Ovary (tissue), 10 donors: ENCODE measurements at regions of chr11 and their contacts with region 1.

Region 1: GRCh38 chr11:20127671-20128527 is 32.4 kb downstream of the DBX1 start:
- DNase-seq: peak; percentile 68 to 84 (median 81)
- H3K4me3 ChIP-seq: no peak overlapping the region
- H3K27ac ChIP-seq: no peak overlapping the region
- H3K4me1 ChIP-seq: peaks cover 3% of the 10 kb centered on the region
- H3K27me3 ChIP-seq: no peaks in the 10 kb centered on the region
- CTCF ChIP-seq: peak; percentile 51 to 68 (median 55)
- EP300 ChIP-seq: no peak
- POLR2A ChIP-seq: no peak

Region 2: GRCh38 chr11:19546325-19546724 is 581.6 kb before region 1 on chr11:
- intact Hi-C with region 1: loop called in 1 of 4 experiments (anchors 10 kb)
- DNase-seq: no peak
- H3K4me3 ChIP-seq: no peak overlapping the region
- H3K27ac ChIP-seq: no peak overlapping the region
- H3K4me1 ChIP-seq: no peaks in the 10 kb centered on the region
- H3K27me3 ChIP-seq: no peaks in the 10 kb centered on the region
- CTCF ChIP-seq: no peak
- EP300 ChIP-seq: no peak
- POLR2A ChIP-seq: no peak

Region 3: GRCh38 chr11:19561011-19561410 is 566.9 kb before region 1 on chr11:
- intact Hi-C with region 1: loop called in 3 of 4 experiments (anchors 5 to 10 kb)
- DNase-seq: no peak
- H3K4me3 ChIP-seq: no peak overlapping the region
- H3K27ac ChIP-seq: no peak overlapping the region
- H3K4me1 ChIP-seq: no peaks in the 10 kb centered on the region
- H3K27me3 ChIP-seq: no peaks in the 10 kb centered on the region
- CTCF ChIP-seq: no peak
- EP300 ChIP-seq: no peak
- POLR2A ChIP-seq: no peak

Region 4: GRCh38 chr11:19566583-19567379 is 561.1 kb before region 1 on chr11:
- intact Hi-C with region 1: loop called in 3 of 4 experiments (anchors 5 to 10 kb)
- DNase-seq: no peak
- H3K4me3 ChIP-seq: no peak overlapping the region
- H3K27ac ChIP-seq: no peak overlapping the region
- H3K4me1 ChIP-seq: no peaks in the 10 kb centered on the region
- H3K27me3 ChIP-seq: no peaks in the 10 kb centered on the region
- CTCF ChIP-seq: no peak
- EP300 ChIP-seq: no peak
- POLR2A ChIP-seq: no peak

Region 5: GRCh38 chr11:19903620-19904069 is 224.3 kb before region 1 on chr11:
- intact Hi-C with region 1: loop called in 1 of 4 experiments (anchors 2 kb)
- DNase-seq: peak; percentile 72 to 86 (median 80)
- H3K4me3 ChIP-seq: no peak overlapping the region
- H3K27ac ChIP-seq: no peak overlapping the region
- H3K4me1 ChIP-seq: peaks cover 6% of the 10 kb centered on the region
- H3K27me3 ChIP-seq: no peaks in the 10 kb centered on the region
- CTCF ChIP-seq: peak in 2 of 3 donors; percentile 47 to 76
- EP300 ChIP-seq: no peak
- POLR2A ChIP-seq: no peak

Region 6: GRCh38 chr11:19951558-19952115 is 176.3 kb before region 1 on chr11:
- intact Hi-C with region 1: loop called (anchors 2 to 5 kb)
- DNase-seq: no peak
- H3K4me3 ChIP-seq: no peak overlapping the region
- H3K27ac ChIP-seq: peak overlapping the region in 1 of 2 donors; percentile 36
- H3K4me1 ChIP-seq: peaks cover 4% of the 10 kb centered on the region
- H3K27me3 ChIP-seq: no peaks in the 10 kb centered on the region
- CTCF ChIP-seq: peak; percentile 18 to 73 (median 73)
- EP300 ChIP-seq: no peak
- POLR2A ChIP-seq: no peak

Region 7: DNA sequence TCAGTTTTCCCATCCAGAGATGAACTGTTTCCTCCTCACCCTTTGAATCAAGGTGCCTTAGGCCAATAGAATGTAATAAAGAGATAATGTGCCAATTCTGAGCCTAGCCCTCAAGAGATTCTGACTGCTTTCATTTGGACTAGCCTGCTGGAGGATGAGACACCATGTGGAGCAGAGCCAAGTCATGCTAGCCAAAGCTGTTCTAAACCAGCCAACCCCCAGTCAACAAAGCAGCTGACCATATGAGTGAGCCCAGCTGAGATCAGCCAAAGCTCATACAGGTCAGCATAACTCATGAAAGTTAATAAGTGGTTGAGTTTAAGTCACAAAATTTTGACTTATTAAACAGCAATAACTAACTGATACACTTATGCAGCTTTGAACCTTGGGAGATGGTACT is 99.0 kb after region 1 on chr11:
- intact Hi-C with region 1: no loop called
- DNase-seq: no peak
- H3K4me3 ChIP-seq: no peak overlapping the region
- H3K27ac ChIP-seq: no peak overlapping the region
- H3K4me1 ChIP-seq: no peaks in the 10 kb centered on the region
- H3K27me3 ChIP-seq: no peaks in the 10 kb centered on the region
- CTCF ChIP-seq: no peak
- EP300 ChIP-seq: no peak
- POLR2A ChIP-seq: no peak

Region 8: DNA sequence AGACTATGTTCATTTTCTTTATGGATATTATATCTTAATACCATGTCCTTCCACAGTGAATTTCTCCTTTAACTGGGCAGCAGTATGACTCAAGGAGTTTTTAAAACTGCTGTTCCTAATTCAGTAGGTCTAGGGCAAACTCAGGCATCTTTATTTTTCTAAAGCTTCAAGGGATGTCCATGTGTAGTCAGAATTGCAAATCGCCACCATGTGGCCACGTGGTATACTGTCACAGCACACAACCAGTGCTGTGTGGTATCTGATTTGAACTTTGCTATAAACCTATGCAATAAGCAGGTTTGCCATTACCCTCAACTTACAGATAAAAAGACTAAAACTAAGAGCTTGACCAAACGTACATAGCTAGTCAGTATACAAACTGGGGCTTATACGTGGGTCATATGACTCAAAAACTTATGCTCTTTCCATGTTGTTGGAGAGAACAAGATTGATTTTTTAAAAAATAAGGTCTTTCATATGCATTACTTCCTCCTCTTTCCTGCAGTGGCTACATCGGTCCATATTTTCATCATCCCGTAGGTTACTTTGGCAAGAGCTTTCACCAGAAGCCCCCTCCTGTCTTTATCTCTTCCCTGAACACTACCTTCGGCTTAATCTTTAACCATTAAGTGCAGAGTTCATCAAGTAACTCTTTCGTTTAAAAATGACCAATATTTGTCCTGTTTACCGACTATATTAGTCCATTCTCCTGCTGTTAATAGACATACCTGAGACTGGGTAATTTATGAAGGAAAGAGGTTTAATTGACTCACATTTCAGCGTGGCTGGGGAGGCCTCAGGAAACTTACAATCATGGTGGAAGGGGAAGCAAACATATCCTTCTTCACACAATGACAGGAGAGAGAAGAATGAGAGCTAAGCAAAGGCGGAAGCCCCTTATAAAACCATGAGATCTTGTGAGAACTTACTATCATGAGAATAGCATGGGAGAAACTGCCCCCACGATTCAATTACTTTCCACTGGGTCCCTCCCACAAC is 227.6 kb after region 1 on chr11:
- intact Hi-C with region 1: loop called in 1 of 4 experiments (anchors 10 kb)
- DNase-seq: no peak
- H3K4me3 ChIP-seq: no peak overlapping the region
- H3K27ac ChIP-seq: no peak overlapping the region
- H3K4me1 ChIP-seq: no peaks in the 10 kb centered on the region
- H3K27me3 ChIP-seq: no peaks in the 10 kb centered on the region
- CTCF ChIP-seq: peak in 2 of 3 donors; percentile 9 to 15
- EP300 ChIP-seq: no peak
- POLR2A ChIP-seq: no peak